Naive thymus-derived CD4-positive, alpha-beta T cell (primary cell): ENCODE measurements at regions of chr1 and their contacts with region 1.

Region 1: GRCh38 chr1:180881806-180882509 is 30.7 kb upstream of the KIAA1614 start:
- DNase-seq: peak in 3 of 9 donors; percentile 5 to 19 (median 10)
- ATAC-seq: no peak
- H3K4me3 ChIP-seq: no peak overlapping the region
- H3K4me3 Mint-ChIP-seq: no peak overlapping the region
- H3K27ac ChIP-seq: no peak overlapping the region
- H3K27ac Mint-ChIP-seq: peak overlapping the region in 1 of 9 donors; percentile 15
- H3K4me1 ChIP-seq: no peaks in the 10 kb centered on the region
- H3K4me1 Mint-ChIP-seq: peaks cover 0 to 5% (median 0%) of the 10 kb centered on the region in 7 donors
- H3K27me3 ChIP-seq: no peaks in the 10 kb centered on the region
- H3K27me3 Mint-ChIP-seq: no peaks in the 10 kb centered on the region

Region 2: GRCh38 chr1:180515864-180516388 is 366.0 kb before region 1 on chr1:
- CTCF ChIA-PET with region 1: no interaction called
- POLR2A ChIA-PET with region 1: no interaction called
- intact Hi-C with region 1: loop called in 1 of 2 experiments (anchors 5 kb)
- DNase-seq: peak in 8 of 9 donors; percentile 33 to 65 (median 53)
- ATAC-seq: peak; percentile 94
- H3K4me3 ChIP-seq: no peak overlapping the region
- H3K4me3 Mint-ChIP-seq: no peak overlapping the region
- H3K27ac ChIP-seq: no peak overlapping the region
- H3K27ac Mint-ChIP-seq: no peak overlapping the region
- H3K4me1 ChIP-seq: no peaks in the 10 kb centered on the region
- H3K4me1 Mint-ChIP-seq: peaks cover 0 to 3% (median 0%) of the 10 kb centered on the region in 7 donors
- H3K27me3 ChIP-seq: no peaks in the 10 kb centered on the region
- H3K27me3 Mint-ChIP-seq: peaks cover 0 to 13% (median 10%) of the 10 kb centered on the region in 5 donors

Region 3: GRCh38 chr1:180778782-180779398 is 103.1 kb before region 1 on chr1:
- CTCF ChIA-PET with region 1: no interaction called
- POLR2A ChIA-PET with region 1: no interaction called
- intact Hi-C with region 1: no loop called
- DNase-seq: no peak
- ATAC-seq: no peak
- H3K4me3 ChIP-seq: no peak overlapping the region
- H3K4me3 Mint-ChIP-seq: no peak overlapping the region
- H3K27ac ChIP-seq: no peak overlapping the region
- H3K27ac Mint-ChIP-seq: no peak overlapping the region
- H3K4me1 ChIP-seq: no peaks in the 10 kb centered on the region
- H3K4me1 Mint-ChIP-seq: peaks cover 4 to 30% (median 13%) of the 10 kb centered on the region in 7 donors
- H3K27me3 ChIP-seq: no peaks in the 10 kb centered on the region
- H3K27me3 Mint-ChIP-seq: no peaks in the 10 kb centered on the region

Region 4: DNA sequence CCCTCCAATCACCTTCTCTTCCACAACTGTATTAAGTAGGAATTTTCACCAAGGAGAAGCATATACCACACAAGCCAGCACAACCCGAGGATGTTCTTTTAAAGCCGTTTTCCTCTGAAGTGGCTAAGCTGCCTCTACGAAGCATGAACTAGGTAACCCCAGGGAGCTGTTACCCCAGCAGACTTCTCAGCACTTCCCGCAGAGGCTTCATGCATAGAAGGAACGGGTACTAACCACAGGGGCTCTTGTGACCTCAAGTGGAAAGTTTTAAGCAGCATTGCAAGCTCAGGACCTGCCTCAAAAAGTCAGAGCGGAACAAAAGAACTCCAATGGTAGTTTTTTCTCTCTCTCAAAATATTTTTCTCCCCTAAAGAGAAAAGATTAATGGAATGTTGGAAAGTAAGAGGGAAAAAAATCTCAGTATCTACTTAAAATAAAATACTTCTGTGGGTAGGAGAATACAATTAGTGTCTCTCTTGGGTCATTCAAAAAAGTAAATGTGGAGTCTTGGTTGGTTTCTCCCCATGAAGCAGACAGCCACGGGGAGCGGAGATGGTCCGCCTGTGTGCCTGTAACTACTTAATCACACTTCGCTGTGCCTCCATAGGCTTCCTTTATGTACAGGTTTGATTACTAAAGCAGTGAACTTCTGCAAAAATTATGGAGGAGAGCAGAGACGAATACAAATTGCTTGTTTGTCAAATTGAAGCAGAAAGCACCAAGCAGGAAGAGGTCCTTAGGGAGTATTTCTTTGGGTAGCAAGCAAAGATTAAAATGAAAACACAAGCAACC is 99.8 kb after region 1 on chr1:
- CTCF ChIA-PET with region 1: no interaction called
- POLR2A ChIA-PET with region 1: no interaction called
- intact Hi-C with region 1: loop called in 1 of 2 experiments (anchors 10 kb)
- DNase-seq: peak in 8 of 9 donors; percentile 32 to 62 (median 55)
- ATAC-seq: peak; percentile 85
- H3K4me3 ChIP-seq: no peak overlapping the region
- H3K4me3 Mint-ChIP-seq: peak overlapping the region in 9 of 10 donors; percentile 15 to 79 (median 34)
- H3K27ac ChIP-seq: peak overlapping the region; percentile 34
- H3K27ac Mint-ChIP-seq: peak overlapping the region; percentile 22 to 78 (median 65)
- H3K4me1 ChIP-seq: peaks cover 5 to 11% of the 10 kb centered on the region in 2 donors
- H3K4me1 Mint-ChIP-seq: peaks cover 12 to 45% (median 30%) of the 10 kb centered on the region in 7 donors
- H3K27me3 ChIP-seq: no peaks in the 10 kb centered on the region
- H3K27me3 Mint-ChIP-seq: no peaks in the 10 kb centered on the region

Region 5: DNA sequence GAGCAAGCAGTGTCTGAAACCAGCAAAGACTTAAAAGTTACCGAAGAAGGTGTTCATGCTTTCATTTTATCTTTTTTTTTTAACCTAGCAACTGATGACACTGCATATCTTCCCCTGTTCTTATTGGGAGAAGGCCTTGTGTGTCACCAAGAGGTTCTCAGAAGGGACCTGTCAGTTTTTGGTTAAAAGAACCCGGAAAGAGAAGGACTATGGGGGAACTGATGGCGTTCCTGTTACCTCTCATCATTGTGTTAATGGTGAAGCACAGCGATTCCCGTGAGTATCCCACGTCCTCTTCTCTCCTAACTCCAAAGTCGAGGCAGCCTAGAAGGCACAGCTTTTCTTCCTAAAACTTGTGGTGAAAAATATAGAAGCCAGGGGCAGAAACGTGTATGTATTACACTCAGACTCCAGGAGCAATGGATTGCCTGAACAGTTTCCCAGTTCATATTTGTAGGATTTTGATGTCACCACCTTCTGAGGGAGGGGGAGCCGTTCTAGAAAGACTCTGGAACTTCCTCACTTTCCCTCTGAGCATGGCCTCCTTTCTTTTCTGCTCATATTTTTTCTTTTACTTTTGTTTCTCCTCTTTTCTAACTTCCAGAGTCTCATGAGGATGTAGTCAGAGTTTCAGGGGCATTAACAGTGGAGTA is 152.0 kb after region 1 on chr1 and contains the start of gene MR1:
- CTCF ChIA-PET with region 1: no interaction called
- POLR2A ChIA-PET with region 1: no interaction called
- intact Hi-C with region 1: loop called in 1 of 2 experiments (anchors 1 kb)
- DNase-seq: peak in 8 of 9 donors; percentile 32 to 92 (median 88)
- ATAC-seq: peak; percentile 97
- H3K4me3 ChIP-seq: peak within 1 kb of the TSS; percentile 77
- H3K4me3 Mint-ChIP-seq: peak within 1 kb of the TSS; percentile 84 to 99 (median 97)
- H3K27ac ChIP-seq: peak within 1 kb of the TSS; percentile 95
- H3K27ac Mint-ChIP-seq: peak within 1 kb of the TSS; percentile 95 to 100 (median 98)
- H3K4me1 ChIP-seq: peaks cover 32 to 42% of the 10 kb centered on the region in 2 donors
- H3K4me1 Mint-ChIP-seq: peaks cover 39 to 69% (median 61%) of the 10 kb centered on the region in 7 donors
- H3K27me3 ChIP-seq: no peaks in the 10 kb centered on the region
- H3K27me3 Mint-ChIP-seq: peaks cover 0 to 6% (median 0%) of the 10 kb centered on the region in 5 donors
- total RNA-seq, gene MR1: 19.8 to 35.8 (median 29.7) TPM